ENCODE measurements at regions of chr5 and their contacts with region 1.

Region 1: GRCh38 chr5:79109527-79110492 is 1.8 kb upstream of the BHMT start:
- DNase-seq: peak; percentile 58
- ATAC-seq: peak; percentile 62

Region 2: DNA sequence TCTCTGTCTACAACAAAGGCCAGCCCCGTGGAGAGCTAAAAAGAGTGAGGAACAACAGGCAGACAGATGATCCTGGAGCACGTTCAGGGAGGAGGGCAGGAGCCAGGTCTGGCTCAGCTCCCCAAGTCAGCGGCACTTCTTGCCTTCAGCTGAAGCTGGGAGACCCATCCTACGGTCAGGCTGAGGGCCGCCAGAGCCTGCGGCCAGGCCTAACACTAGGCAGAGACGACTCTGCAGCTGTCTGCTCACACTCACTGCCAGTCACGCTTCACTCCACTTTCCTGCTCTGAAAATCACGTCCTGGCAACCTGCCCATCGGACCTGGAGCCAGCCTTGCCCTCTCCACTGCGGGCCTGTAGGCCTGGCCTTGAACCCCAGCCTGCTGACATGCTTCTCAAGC is 300.4 kb before region 1 on chr5:
- intact Hi-C with region 1: no loop called
- DNase-seq: no peak
- ATAC-seq: peak; percentile 53

Region 3: DNA sequence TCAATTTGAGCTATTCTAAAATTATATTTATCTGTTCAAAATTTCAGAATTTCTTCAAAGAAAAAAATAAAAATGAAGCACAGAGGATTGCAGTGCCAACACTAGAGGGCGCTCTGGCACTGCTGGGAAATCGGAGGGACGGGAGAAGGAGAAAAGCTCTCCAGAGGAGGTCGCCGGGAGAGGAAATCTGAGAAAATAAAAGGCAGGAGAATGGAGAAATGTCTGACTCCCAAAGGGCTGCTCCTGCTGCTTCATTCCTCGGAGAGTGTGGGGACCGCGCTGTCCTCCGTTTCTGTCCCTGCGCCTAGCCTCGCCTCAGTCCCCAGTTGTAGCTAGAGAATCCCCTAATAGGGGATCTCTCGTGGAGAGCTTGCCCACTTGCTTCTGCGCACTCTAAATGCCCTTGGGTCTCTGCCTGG is 84.7 kb before region 1 on chr5:
- intact Hi-C with region 1: loop called (anchors 5 kb)
- DNase-seq: peak; percentile 62
- ATAC-seq: peak; percentile 87